ENCODE measurements at regions of chrX and their contacts with region 1.

Region 1: DNA sequence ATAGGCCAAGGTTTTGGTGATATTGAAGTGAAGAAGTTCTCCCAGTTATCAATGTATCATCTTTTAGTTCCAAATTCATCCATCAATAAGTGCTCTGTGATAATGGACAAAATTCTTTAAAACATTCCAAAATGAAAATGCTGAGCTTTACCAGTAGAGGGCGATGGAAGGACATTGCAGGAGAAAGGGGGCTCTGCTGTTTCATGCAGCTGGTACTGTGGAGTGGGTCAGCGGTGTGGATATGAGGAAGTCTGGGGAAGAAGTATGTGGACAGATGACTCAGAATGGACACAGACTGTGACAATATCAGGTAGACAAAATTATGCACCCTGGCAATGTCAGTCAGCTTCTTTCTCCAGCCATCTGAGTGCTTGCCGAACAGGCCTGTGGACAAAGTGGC is 46.6 kb upstream of the HS6ST2 start:
- DNase-seq: peak; percentile 3
- H3K4me3 ChIP-seq: no peak overlapping the region
- H3K27ac ChIP-seq: no peak overlapping the region
- H3K4me1 ChIP-seq: no peaks in the 10 kb centered on the region
- H3K27me3 ChIP-seq: no peaks in the 10 kb centered on the region
- CTCF ChIP-seq: peak; percentile 30 to 40
- POLR2A ChIP-seq: no peak

Region 2: DNA sequence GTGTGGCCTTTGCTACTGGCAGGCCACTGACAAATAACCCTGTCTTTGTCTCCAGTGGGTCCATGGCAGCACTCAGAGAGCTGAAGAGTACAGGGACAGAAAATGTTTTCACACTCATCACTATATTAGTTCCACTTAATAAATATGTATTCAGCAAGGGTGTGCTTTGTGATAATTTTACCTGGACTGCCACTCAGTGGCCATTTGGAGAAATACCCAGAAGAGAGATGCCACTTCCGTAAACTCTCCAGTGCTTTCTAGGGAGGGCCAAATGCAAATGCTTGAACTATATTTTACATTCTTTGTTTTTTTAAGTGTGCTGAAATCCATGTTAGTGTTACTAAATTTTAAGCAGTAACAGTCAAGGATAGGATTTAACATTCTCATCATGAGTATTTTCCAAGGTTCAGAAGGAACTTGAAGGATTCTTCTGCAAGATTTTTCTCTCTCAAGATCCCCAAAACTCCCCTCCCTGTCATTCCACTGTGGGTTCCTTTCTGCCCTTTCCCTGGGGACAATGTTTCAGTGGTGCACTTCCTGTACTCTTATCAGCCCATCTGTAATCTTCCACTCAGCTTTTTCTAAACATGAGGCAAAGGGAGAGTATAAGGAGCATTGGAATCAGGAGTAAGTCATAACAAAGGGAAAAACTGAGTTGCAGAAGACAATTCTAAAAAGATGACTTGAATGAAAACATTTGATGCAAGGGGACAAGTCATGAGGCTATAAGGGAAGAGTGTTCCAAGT is 167.1 kb after region 1 on chrX:
- CTCF ChIA-PET with region 1: no interaction called
- POLR2A ChIA-PET with region 1: no interaction called
- dilution Hi-C with region 1: no loop called
- intact Hi-C with region 1: loop called (anchors 10 kb)
- DNase-seq: peak; percentile 1
- H3K4me3 ChIP-seq: no peak overlapping the region
- H3K27ac ChIP-seq: no peak overlapping the region
- H3K4me1 ChIP-seq: no peaks in the 10 kb centered on the region
- H3K27me3 ChIP-seq: no peaks in the 10 kb centered on the region
- CTCF ChIP-seq: peak in 1 of 2 donors; percentile 8
- POLR2A ChIP-seq: no peak